Ovary (tissue), 10 donors: ENCODE measurements at regions of chr2 and their contacts with region 1.

Region 1: DNA sequence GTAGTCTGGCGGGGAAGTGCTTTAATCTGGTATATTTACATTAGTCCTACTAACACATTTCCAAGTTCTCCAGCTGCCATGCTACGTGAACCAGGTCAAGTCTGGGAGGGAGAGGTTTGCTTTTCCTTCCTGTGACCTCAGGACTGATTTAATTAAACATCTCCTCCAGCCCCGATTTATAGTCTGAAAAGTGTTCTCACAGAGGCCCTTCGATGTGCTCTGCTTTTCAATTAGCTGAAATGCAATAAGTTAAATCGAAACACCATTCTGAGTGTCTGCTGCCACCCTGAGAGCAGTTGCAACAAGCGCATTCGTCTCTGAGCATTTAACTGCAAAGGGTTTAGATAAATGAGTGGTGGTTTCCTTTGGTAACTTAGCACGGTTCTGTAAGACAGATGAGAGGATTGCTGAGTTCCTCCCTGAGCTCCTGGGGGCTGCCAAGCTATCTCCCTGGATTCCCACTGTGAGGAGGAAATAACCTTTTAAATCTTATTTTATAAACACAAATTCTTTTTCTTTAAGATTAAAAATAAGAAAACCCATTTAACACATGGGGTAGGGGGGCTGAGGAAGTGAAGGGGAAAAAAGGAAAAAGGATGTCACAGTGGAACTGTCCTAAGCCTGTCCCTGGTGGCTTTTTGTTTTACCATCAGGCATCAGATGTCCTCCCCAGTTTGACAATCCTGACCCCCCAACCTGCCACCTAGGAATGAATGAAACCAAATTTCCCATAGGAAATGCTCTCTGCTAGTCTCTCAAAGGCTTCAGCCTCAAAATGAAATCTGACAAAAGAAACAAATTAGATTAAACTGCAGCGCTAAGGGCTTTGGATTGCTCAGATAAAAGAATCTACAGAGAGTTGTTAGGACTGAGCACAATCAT is 56.5 kb upstream of the CREB1 start:
- DNase-seq: peak; percentile 35 to 56 (median 47)
- H3K4me3 ChIP-seq: no peak overlapping the region
- H3K27ac ChIP-seq: no peak overlapping the region
- H3K4me1 ChIP-seq: peaks cover 4% of the 10 kb centered on the region
- H3K27me3 ChIP-seq: no peaks in the 10 kb centered on the region
- CTCF ChIP-seq: peak; percentile 7 to 52 (median 51)
- EP300 ChIP-seq: no peak
- POLR2A ChIP-seq: no peak

Region 2: GRCh38 chr2:206693399-206694137 is 779.7 kb before region 1 on chr2:
- intact Hi-C with region 1: loop called (anchors 5 to 10 kb)
- DNase-seq: peak in 1 of 5 donors; percentile 23
- H3K4me3 ChIP-seq: no peak overlapping the region
- H3K27ac ChIP-seq: no peak overlapping the region
- H3K4me1 ChIP-seq: no peaks in the 10 kb centered on the region
- H3K27me3 ChIP-seq: no peaks in the 10 kb centered on the region
- CTCF ChIP-seq: peak in 2 of 3 donors; percentile 25 to 50
- EP300 ChIP-seq: no peak
- POLR2A ChIP-seq: no peak

Region 3: DNA sequence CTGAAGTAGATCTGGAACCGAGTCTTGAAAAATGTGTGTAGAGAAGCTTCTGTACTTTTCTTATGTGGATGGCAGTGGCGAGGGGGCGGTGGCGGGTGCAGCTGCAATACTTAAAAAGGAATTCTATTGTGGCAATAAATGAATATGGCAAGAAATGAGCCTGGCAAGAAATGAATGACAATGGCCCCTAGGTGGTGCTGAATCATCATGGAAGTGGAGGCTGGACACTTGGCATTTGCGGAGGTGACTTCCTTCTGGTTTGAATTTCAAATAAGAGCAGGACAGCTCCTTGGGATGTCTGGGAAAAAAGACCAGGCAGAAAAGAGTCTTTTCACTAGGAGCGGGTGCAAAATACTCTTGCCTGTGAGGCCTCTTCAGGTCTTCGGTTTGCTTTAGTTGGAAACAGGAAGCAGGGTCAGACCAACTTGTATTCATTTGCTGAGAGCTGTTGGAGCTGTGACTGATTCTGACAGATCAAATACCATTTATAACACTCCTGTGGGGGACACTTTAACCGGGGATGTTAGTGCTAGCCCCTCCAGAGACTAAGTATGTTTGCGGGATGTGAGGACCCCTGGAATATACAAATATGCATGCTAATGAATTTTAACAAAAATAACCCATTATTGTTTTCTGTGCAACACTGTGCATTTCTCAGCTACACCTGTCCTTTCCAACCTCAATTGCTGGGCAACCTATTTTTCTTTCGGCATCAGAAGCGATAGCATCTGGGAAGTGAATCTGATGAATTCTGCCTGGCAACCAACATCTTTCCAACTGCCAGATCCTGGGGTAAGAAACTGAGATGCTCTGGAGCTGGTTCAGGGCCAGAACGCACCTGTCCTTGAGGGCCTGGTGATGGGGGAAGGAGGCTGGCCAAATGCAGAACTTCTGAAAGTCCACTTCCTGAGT is 672.5 kb before region 1 on chr2:
- intact Hi-C with region 1: loop called (anchors 2 to 5 kb)
- DNase-seq: peak; percentile 56 to 74 (median 58)
- H3K4me3 ChIP-seq: no peak overlapping the region
- H3K27ac ChIP-seq: no peak overlapping the region
- H3K4me1 ChIP-seq: no peaks in the 10 kb centered on the region
- H3K27me3 ChIP-seq: no peaks in the 10 kb centered on the region
- CTCF ChIP-seq: peak; percentile 39 to 66 (median 58)
- EP300 ChIP-seq: no peak
- POLR2A ChIP-seq: no peak

Region 4: DNA sequence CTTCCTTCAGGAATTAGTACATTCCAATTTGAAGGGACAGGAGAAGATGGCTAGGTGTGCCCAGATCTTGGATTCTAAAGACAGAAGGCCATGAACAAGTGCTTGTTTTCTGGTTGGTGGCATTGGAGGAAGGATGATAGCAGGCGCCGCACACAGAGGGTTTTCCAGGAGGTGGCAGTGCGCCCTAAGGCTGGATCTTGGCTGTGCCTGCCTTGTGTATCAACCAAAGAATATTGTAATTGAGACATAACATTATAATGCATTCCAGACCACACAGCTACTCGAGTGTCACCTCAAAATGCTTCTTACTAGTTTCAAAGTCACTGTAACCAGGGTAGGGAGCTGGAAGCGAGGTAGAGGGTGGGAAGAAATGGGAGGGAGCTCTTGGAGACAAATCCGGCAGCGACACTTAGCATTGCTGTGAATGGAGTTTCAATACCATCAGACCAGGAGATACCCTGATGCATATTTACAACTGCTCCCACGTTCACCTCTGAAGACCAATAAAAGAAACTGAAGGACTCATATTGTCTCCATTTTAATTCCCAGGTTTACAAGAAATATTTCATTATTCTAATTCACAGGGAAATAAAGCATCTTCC is 491.4 kb before region 1 on chr2:
- intact Hi-C with region 1: loop called (anchors 2 to 10 kb)
- DNase-seq: peak; percentile 40 to 79 (median 70)
- H3K4me3 ChIP-seq: no peak overlapping the region
- H3K27ac ChIP-seq: no peak overlapping the region
- H3K4me1 ChIP-seq: no peaks in the 10 kb centered on the region
- H3K27me3 ChIP-seq: no peaks in the 10 kb centered on the region
- CTCF ChIP-seq: peak; percentile 22 to 52 (median 36)
- EP300 ChIP-seq: no peak
- POLR2A ChIP-seq: no peak

Region 5: GRCh38 chr2:207046724-207047123 is 426.6 kb before region 1 on chr2:
- intact Hi-C with region 1: loop called in 3 of 4 experiments (anchors 5 kb)
- DNase-seq: peak in 1 of 5 donors; percentile 39
- H3K4me3 ChIP-seq: no peak overlapping the region
- H3K27ac ChIP-seq: no peak overlapping the region
- H3K4me1 ChIP-seq: no peaks in the 10 kb centered on the region
- H3K27me3 ChIP-seq: no peaks in the 10 kb centered on the region
- CTCF ChIP-seq: peak in 1 of 3 donors; percentile 19
- EP300 ChIP-seq: no peak
- POLR2A ChIP-seq: no peak